ENCODE measurements at regions of chr22 and their contacts with region 1.

Region 1: DNA sequence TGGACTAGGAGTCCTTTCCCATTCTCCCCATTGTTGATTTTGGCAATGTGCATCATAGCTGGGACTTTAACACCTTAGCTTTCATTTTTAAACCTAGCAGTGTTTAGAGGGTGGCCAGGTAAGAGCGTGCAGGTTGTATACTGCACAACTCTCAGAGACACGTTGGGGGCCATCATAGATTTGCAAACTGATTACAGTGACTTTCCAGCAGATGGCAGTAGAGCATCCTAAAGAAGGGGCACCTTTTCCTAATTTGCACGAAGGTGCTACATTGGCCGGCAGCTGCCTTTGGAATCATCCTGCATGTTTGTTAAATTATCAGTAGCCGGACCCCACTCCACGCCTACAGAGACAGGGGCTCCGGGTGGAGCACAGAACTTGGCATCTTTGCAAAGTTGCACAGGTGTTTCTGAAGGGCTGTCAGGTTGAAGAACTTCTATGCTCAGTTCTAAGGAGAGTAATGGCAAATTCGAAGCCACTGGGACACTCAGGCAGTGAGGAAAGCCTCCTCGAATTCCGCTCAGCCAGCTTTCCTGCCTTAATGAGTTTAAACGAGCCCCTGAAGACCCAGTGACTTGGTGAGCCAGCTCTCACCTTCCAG is 7.7 kb downstream of the LHFPL7 start:
- DNase-seq: peak; percentile 27
- ATAC-seq: peak; percentile 83
- H3K4me3 Mint-ChIP-seq: no peak overlapping the region
- H3K27ac Mint-ChIP-seq: no peak overlapping the region
- H3K4me1 Mint-ChIP-seq: peaks cover 9% of the 10 kb centered on the region
- H3K27me3 Mint-ChIP-seq: no peaks in the 10 kb centered on the region
- CTCF ChIP-seq: peak; percentile 43; the same call in 1 of the 2 replicates

Region 2: GRCh38 chr22:24926849-24927579 is 11.8 kb before region 1 on chr22:
- CTCF ChIA-PET with region 1: interaction called, 22 read pairs
- POLR2A ChIA-PET with region 1: interaction called, 3 read pairs
- DNase-seq: no peak
- ATAC-seq: no peak
- H3K4me3 Mint-ChIP-seq: no peak overlapping the region
- H3K27ac Mint-ChIP-seq: no peak overlapping the region
- H3K4me1 Mint-ChIP-seq: peaks cover 13% of the 10 kb centered on the region
- H3K27me3 Mint-ChIP-seq: no peaks in the 10 kb centered on the region; the same call in 1 of the 2 replicates
- CTCF ChIP-seq: no peak

Region 3: GRCh38 chr22:24951942-24952836 is 13.3 kb after region 1 on chr22 and contains the start of gene KIAA1671:
- CTCF ChIA-PET with region 1: interaction called, 58 read pairs
- POLR2A ChIA-PET with region 1: interaction called, 3 read pairs
- DNase-seq: peak; percentile 98
- ATAC-seq: peak; percentile 75
- H3K4me3 Mint-ChIP-seq: peak within 1 kb of the TSS; percentile 98
- H3K27ac Mint-ChIP-seq: peak within 1 kb of the TSS; percentile 92
- H3K4me1 Mint-ChIP-seq: peaks cover 53% of the 10 kb centered on the region
- H3K27me3 Mint-ChIP-seq: peaks cover 10% of the 10 kb centered on the region
- CTCF ChIP-seq: peak; percentile 98
- total RNA-seq, gene KIAA1671: 22.0 to 26.0 TPM (median 24.0 TPM) in 3 replicates

Region 4: DNA sequence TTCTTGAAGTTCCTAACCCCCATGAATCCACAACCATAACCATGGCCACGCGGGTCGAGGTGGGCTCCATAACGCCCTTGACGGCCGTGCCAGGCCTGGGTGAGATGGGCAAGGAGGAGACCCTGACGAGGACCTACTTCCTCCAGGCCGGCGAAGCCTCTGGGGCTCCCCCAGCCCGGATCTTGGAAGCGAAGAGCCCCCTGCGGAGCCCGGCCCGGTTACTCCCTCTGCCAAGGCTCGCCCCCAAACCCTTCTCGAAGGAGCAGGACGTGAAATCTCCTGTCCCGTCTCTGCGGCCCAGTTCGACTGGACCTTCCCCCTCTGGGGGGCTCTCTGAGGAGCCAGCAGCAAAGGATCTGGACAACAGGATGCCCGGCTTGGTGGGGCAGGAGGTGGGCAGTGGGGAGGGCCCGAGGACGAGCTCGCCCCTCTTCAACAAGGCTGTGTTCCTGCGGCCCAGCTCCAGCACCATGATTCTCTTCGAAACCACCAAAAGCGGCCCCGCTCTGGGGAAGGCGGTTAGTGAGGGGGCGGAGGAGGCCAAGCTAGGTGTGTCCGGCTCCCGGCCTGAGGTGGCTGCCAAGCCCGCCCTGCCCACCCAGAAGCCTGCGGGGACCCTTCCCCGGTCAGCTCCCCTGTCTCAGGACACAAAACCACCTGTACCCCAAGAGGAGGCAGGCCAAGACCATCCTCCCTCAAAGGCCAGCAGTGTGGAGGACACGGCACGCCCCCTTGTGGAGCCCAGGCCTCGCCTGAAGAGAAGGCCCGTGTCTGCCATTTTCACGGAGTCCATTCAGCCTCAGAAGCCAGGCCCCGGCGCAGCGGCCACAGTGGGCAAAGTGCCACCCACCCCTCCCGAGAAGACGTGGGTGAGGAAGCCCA is 89.4 kb after region 1 on chr22:
- CTCF ChIA-PET with region 1: interaction called, 17 read pairs
- POLR2A ChIA-PET with region 1: no interaction called
- DNase-seq: peak; percentile 79
- ATAC-seq: peak; percentile 84
- H3K4me3 Mint-ChIP-seq: no peak overlapping the region
- H3K27ac Mint-ChIP-seq: peak overlapping the region; percentile 29; the same call in 1 of the 2 replicates
- H3K4me1 Mint-ChIP-seq: peaks cover 18% of the 10 kb centered on the region
- H3K27me3 Mint-ChIP-seq: no peaks in the 10 kb centered on the region
- CTCF ChIP-seq: peak; percentile 24; the same call in 1 of the 2 replicates

Region 5: DNA sequence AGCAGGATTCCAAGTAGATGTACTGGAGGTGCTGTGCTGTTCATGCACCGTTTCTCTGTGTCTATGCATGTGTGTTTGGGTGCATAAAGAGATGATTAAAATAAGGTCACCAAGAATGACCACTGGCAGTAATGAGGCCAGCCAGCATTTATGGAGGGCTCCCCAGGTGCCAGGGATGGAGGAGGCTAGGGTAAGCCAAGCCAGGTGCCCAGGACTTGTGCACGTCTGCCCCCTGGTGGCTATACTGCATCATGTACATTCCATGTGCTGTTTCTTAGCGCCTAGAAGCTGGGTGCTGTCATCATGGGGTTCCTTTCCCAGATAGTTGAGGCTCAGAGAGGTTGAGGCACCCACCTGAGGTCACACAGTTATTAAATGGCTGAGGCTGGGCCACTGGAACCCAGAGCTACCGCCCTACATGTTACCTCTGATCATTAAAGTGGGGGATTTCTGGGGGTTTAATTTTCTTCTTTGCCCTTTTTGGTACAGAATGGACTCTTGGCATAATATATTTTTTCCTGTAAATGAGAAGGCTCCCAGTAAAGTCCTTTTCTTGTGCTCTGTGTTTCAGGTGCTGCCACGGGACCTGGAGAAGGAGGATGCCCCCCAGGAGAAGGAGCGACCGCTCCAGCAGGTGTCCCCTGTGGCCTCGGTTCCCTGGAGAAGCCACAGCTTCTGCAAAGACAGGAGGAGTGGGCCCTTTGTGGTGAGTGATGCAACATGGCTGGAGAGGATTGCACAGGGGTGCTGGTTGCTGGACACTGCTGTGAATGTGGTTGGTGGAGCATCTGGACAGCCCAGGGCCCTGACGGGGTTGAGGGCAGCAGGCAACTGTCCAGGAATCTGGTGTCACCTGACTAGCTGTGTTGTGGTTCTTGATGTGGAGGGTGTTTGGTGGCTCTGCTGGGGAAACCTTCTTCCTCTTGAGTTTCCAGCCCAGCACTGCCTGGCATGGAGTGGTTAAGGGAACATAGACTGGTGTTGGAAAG is 110.1 kb after region 1 on chr22:
- CTCF ChIA-PET with region 1: interaction called, 61 read pairs
- POLR2A ChIA-PET with region 1: no interaction called
- DNase-seq: peak; percentile 81
- ATAC-seq: peak; percentile 87
- H3K4me3 Mint-ChIP-seq: no peak overlapping the region
- H3K27ac Mint-ChIP-seq: no peak overlapping the region
- H3K4me1 Mint-ChIP-seq: peaks cover 4% of the 10 kb centered on the region
- H3K27me3 Mint-ChIP-seq: no peaks in the 10 kb centered on the region
- CTCF ChIP-seq: peak; percentile 95

Region 6: GRCh38 chr22:25057013-25057881 is 118.4 kb after region 1 on chr22:
- CTCF ChIA-PET with region 1: interaction called, 61 read pairs
- POLR2A ChIA-PET with region 1: no interaction called
- DNase-seq: peak; percentile 95
- ATAC-seq: peak; percentile 96
- H3K4me3 Mint-ChIP-seq: no peak overlapping the region
- H3K27ac Mint-ChIP-seq: peak overlapping the region; percentile 81; the same call in 1 of the 2 replicates
- H3K4me1 Mint-ChIP-seq: peaks cover 22% of the 10 kb centered on the region
- H3K27me3 Mint-ChIP-seq: no peaks in the 10 kb centered on the region
- CTCF ChIP-seq: peak; percentile 83

Measured in WTC11 (cell line).